ENCODE measurements at regions of chr1 and their contacts with region 1.

Region 1: GRCh38 chr1:231806623-231807495 is 180.3 kb downstream of the DISC1 start:
- DNase-seq: peak; percentile 49 to 69 (median 60)
- ATAC-seq: peak; percentile 99
- H3K4me3 ChIP-seq: no peak overlapping the region
- H3K27ac ChIP-seq: no peak overlapping the region
- H3K4me1 ChIP-seq: peaks cover 0 to 6% of the 10 kb centered on the region in 2 experiments; a peak in 2 of 5 replicates
- H3K27me3 ChIP-seq: no peaks in the 10 kb centered on the region
- CTCF ChIP-seq: peak; percentile 83 to 88 (median 88)
- EP300 ChIP-seq: no peak
- POLR2A ChIP-seq: no peak
- RAD21 ChIP-seq: peak; percentile 55 to 70

Region 2: DNA sequence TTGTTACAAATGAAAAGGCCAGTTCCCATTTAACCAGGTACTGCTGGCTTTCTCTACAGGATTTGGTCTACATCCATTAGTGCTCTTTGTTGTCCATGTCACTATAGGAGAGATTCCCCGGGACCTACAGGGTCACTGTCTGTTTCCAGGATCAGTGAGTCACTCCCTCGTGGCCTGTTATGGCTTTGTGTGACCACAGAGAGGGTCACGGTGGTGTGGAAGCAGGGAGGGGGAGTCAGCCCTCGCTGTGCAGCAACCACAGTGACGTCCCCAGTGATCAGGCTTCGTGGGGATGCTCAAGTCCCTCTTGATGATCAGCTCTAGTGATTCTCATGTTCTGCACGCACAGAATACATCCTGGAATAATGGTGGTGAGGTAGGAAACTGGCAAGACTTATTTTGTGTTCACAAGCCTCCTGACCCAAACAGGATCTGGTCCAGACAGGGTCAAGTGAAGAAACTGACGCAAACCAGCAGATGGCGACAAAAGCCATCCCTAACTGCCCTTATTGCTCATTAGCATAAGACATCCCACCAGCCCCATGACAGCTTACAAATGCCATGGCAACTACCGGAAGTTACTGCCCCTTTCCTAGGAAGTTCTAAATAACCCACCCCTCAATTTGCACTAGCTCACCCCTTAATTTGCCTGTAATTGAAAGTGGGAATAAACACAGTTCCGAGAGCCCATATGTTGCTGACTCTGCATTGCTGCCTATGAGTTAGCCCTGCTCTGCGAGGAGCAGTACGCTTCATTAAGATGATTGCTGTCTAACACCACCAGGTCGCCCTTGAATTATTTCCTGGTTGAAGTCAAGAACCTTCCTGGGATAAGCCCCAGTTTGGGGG is 81.8 kb before region 1 on chr1:
- CTCF ChIA-PET with region 1: no interaction called
- POLR2A ChIA-PET with region 1: no interaction called
- in situ Hi-C with region 1: no loop called
- intact Hi-C with region 1: loop called (anchors 1 kb)
- DNase-seq: peak; percentile 50 to 83 (median 64)
- ATAC-seq: peak; percentile 100
- H3K4me3 ChIP-seq: no peak overlapping the region
- H3K27ac ChIP-seq: no peak overlapping the region
- H3K4me1 ChIP-seq: no peaks in the 10 kb centered on the region
- H3K27me3 ChIP-seq: peaks cover 3 to 4% of the 10 kb centered on the region in 2 experiments; a peak in 2 of 5 replicates
- CTCF ChIP-seq: peak; percentile 80 to 85 (median 85)
- EP300 ChIP-seq: no peak
- POLR2A ChIP-seq: no peak
- RAD21 ChIP-seq: peak; percentile 65 to 79

Region 3: DNA sequence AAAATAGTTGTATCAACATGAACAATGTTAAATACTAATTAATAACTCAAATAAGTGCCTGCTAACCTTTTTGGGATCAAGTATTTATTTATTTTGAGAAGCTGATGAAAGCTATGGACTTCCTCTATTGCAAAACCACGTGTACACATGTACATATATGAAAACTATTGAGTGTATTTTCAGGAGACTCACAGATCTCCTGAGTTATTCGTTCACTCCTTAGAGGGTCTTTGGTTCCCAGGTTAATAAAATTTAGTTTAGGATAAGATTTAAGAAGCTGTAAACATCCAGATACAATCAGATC is 49.8 kb before region 1 on chr1:
- CTCF ChIA-PET with region 1: interaction called, 4 read pairs
- POLR2A ChIA-PET with region 1: no interaction called
- in situ Hi-C with region 1: loop called (anchors 5 kb)
- intact Hi-C with region 1: loop called (anchors 1 kb)
- DNase-seq: no peak
- ATAC-seq: peak; percentile 74
- H3K4me3 ChIP-seq: no peak overlapping the region
- H3K27ac ChIP-seq: no peak overlapping the region
- H3K4me1 ChIP-seq: no peaks in the 10 kb centered on the region
- H3K27me3 ChIP-seq: peaks cover 2 to 5% of the 10 kb centered on the region in 2 experiments; a peak in 2 of 5 replicates
- CTCF ChIP-seq: no peak
- EP300 ChIP-seq: no peak
- POLR2A ChIP-seq: no peak
- RAD21 ChIP-seq: no peak; a peak in 1 of 4 replicates

Measured in K562 (cell line).